Endothelial cell of umbilical vein (primary cell): ENCODE measurements at regions of chr3 and their contacts with region 1.

Region 1: DNA sequence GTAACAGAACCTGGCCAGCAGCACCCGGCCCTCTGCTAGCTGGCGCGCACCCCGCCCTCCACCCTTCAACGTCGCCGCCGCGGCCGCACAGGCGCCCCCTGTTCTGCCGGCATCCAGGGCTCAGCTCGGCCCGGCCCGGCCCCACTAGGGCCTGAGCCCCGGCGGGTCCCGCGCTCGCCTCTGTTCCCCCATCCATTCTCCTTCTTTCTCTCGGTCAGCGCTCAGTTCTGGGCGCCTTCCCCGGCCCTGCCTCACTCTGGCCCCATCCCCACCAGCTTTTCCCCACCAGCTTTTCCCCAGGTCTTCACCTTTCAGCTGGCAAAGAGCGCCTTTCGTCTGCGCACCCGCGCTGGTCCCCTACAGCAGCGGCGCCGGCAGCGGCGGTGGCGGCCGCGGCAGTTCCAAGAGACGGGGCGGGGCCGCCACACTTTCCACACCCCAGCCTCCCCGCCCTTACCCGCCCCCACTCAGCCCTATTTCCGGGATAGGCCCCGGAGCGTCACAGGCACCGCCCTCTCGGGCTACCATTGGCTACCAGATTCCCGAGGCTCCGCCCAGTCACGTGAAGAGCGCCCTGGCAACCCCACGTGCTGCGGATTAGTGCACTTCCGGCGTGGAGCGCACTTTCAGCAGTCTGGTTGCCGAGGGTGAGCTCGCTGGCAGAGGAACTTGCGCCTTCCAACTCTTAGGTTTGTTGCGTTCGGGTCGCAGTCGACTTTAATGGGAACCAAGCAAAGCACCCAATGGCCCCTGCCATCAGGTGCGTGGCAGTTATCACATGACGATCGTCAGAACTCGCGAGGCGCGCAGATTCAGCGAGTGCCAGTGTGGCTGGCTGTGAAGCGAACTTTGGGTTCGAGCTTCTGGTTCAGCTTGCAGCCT is at the start of gene EIF5A2:
- DNase-seq: peak; percentile 92
- H3K4me3 ChIP-seq: peak within 1 kb of the TSS; percentile 64 to 69 (median 68)
- H3K27ac ChIP-seq: peak within 1 kb of the TSS; percentile 22
- H3K4me1 ChIP-seq: peaks cover 12% of the 10 kb centered on the region
- H3K27me3 ChIP-seq: peaks cover 0 to 3% of the 10 kb centered on the region in 2 experiments
- CTCF ChIP-seq: no peak
- POLR2A ChIP-seq: peak; percentile 70
- total RNA-seq, gene EIF5A2: 10.9 and 12.3 TPM in 2 replicates

Region 2: DNA sequence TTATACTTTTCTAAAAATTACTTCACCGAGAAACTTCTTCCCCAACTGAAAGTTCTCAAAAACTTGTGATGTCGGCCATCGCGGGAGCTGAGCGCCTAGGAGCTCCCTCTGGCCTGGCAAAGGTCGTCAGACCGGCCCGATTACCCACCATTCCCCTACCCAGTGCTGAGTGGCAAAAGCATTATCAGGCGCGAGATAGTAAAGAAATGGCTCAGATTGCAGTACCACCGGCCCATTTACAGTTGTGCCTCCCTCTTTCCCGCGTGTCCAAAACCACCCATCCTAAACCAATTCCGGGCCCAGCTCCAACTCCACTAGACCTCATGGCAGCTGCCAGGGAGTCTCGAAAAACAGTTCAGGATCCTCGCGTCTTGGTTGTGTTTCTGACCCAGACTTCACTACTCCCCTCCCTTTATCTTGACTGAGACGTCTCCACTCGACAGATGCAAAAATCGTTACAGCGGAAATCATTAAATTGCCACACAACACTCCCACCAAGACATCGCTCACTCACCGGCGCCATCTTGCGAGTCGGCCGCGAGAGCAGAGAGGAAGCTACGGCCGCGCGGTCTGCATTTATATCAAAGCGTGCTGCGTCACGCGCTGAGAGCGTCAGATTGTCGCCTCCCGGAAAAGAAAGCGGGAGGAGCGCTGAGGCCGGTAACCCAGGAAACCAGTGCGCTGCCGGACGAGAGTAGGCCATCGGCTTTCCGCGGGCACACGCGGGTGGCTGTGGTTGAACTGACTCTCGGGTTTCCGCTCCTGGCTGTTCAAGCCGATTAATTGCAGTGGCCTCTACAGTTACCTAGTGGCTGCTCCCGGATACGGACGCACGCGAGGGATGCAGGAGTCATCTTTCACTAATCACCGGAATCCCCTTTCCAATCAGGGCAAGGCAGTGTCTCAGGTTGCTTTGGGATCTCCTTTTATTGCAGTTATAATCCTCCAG is 38.6 kb before region 1 on chr3 and contains the start of gene RPL22L1:
- CTCF ChIA-PET with region 1: no interaction called
- POLR2A ChIA-PET with region 1: interaction called, 7 read pairs
- dilution Hi-C with region 1: no loop called
- intact Hi-C with region 1: loop called (anchors 1 kb)
- DNase-seq: peak; percentile 94
- H3K4me3 ChIP-seq: peak within 1 kb of the TSS; percentile 79 to 94 (median 84)
- H3K27ac ChIP-seq: peak within 1 kb of the TSS; percentile 87
- H3K4me1 ChIP-seq: peaks cover 21% of the 10 kb centered on the region
- H3K27me3 ChIP-seq: no peaks in the 10 kb centered on the region
- CTCF ChIP-seq: peak in 1 of 2 donors; percentile 13
- POLR2A ChIP-seq: peak; percentile 99
- total RNA-seq, gene RPL22L1: 159 and 176 TPM in 2 replicates

Region 3: GRCh38 chr3:170896781-170897180 is 11.7 kb before region 1 on chr3:
- CTCF ChIA-PET with region 1: no interaction called
- POLR2A ChIA-PET with region 1: no interaction called
- dilution Hi-C with region 1: no loop called
- intact Hi-C with region 1: no loop called
- DNase-seq: no peak
- H3K4me3 ChIP-seq: no peak overlapping the region
- H3K27ac ChIP-seq: no peak overlapping the region
- H3K4me1 ChIP-seq: no peaks in the 10 kb centered on the region
- H3K27me3 ChIP-seq: no peaks in the 10 kb centered on the region
- CTCF ChIP-seq: no peak
- POLR2A ChIP-seq: no peak